Heart right ventricle (tissue), 16 donors: ENCODE measurements at regions of chr6 and their contacts with region 1.

Region 1: GRCh38 chr6:147506704-147507114 is 1.8 kb upstream of the SAMD5 start:
- DNase-seq: peak; percentile 66 to 79
- ATAC-seq: peak; percentile 63 to 87 (median 84)
- H3K4me3 ChIP-seq: peak overlapping the region; percentile 56 to 86 (median 70)
- H3K27ac ChIP-seq: no peak overlapping the region
- H3K4me1 ChIP-seq: peaks cover 0 to 33% (median 16%) of the 10 kb centered on the region in 9 donors
- H3K27me3 ChIP-seq: peaks cover 0 to 88% (median 37%) of the 10 kb centered on the region in 7 donors
- CTCF ChIP-seq: peak; percentile 72 to 92 (median 86)

Region 2: DNA sequence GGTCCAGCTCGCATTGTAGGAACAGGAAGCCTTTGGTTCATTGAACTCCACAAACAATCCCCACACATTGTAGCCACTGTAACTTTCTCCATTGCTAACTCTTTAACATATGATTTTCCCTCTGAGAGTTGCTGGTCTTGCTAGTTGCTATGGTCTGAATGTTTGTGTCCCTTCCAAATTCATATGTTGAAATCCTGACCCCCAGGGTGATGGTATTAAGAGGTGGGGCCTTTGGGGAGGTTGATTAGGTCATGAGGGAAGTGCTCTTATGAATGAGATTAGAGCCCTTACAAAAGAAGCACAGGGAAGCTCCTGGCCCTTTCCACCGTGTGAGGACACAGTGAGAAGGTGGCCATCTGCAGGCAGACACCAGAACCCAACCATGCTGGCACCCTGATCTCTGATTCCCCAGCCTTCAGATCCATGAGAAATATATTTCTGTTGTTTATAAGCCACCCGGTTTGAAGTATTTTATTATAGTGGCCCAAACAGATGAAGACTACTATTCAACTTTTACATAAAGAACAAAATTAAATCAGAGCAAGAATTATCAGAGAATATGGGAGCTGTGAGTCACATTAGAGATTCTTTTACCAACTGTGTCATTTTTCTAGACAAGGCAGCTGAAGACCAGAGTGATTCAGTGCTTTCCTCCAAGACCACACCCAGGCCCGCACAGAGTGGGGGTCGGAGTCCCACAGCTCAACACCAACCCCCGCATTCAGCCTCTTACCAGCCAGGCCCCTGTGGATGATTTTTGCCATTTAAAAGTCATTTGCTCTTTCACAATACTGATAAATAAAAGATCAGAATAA is 144.7 kb after region 1 on chr6:
- intact Hi-C with region 1: loop called (anchors 2 to 5 kb)
- DNase-seq: peak; percentile 19 to 28
- ATAC-seq: peak; percentile 71 to 96 (median 85)
- H3K4me3 ChIP-seq: no peak overlapping the region
- H3K27ac ChIP-seq: peak overlapping the region in 1 of 10 donors; percentile 28
- H3K4me1 ChIP-seq: peaks cover 0 to 16% (median 12%) of the 10 kb centered on the region in 9 donors
- H3K27me3 ChIP-seq: no peaks in the 10 kb centered on the region
- CTCF ChIP-seq: peak in 7 of 9 donors; percentile 33 to 59 (median 44)

Region 3: DNA sequence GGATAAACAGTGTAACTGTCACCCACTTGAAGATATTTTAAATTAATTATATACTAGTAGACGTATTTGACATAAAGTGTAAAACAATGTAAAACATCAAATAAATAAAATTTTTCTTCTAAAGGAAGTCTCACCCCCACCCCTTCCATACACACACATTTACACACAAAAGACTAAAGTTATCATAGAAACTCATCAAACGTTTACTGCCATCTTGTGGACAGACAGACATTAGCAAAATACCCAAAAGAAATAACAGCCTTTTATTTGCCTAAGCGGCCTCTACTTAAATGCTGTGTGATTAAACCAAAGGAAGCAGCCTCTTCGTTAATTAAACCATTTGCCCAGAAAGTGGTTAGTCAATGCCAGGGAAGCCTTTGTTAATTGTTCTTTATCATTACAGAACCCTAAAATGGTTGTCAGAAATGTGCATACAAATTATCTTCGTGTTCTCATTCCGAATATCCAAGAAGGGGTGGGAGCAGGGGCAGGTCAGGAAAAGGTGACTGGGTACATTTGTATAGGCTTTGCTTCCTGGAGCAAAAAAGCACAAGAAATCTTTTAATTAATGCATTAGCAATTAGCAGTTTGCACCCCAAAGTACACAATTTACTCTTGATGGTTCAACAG is 659.7 kb after region 1 on chr6:
- intact Hi-C with region 1: loop called (anchors 1 to 5 kb)
- DNase-seq: peak in 1 of 2 donors; percentile 23
- ATAC-seq: no peak
- H3K4me3 ChIP-seq: no peak overlapping the region
- H3K27ac ChIP-seq: no peak overlapping the region
- H3K4me1 ChIP-seq: no peaks in the 10 kb centered on the region
- H3K27me3 ChIP-seq: no peaks in the 10 kb centered on the region
- CTCF ChIP-seq: peak; percentile 10 to 79 (median 72)

Region 4: DNA sequence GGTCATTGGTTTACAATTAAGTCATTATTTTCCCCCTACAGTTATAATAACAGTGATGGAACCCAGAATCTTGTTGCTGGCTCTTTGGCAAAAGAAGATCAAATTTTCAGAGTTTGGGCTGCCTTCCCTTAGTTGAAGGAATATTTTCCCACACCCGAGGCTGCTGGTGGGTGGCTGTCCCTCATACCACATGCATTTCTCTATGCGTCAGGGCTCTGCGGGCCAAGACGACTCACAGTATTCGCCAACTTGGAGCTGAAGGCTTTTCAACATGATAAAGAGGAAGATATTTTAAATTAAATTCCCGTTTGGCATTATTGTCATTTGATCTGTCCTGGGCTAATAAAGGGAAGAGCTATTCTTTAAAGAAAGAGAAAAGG is 733.7 kb after region 1 on chr6:
- intact Hi-C with region 1: loop called in 1 of 10 experiments (anchors 10 kb)
- DNase-seq: peak; percentile 25 to 43
- ATAC-seq: peak in 7 of 8 donors; percentile 34 to 60 (median 48)
- H3K4me3 ChIP-seq: no peak overlapping the region
- H3K27ac ChIP-seq: peak overlapping the region in 9 of 10 donors; percentile 3 to 79 (median 62)
- H3K4me1 ChIP-seq: peaks cover 3 to 66% (median 35%) of the 10 kb centered on the region in 9 donors
- H3K27me3 ChIP-seq: no peaks in the 10 kb centered on the region
- CTCF ChIP-seq: no peak